ENCODE measurements at regions of chr13 and their contacts with region 1.

Region 1: GRCh38 chr13:48769107-48769704 is 115.5 kb downstream of the CYSLTR2 start:
- DNase-seq: peak; percentile 90
- ATAC-seq: peak; percentile 96
- H3K4me3 Mint-ChIP-seq: no peak overlapping the region
- H3K27ac Mint-ChIP-seq: no peak overlapping the region
- H3K4me1 Mint-ChIP-seq: peaks cover 29% of the 10 kb centered on the region
- H3K27me3 Mint-ChIP-seq: peaks cover 22% of the 10 kb centered on the region

Region 2: GRCh38 chr13:48037346-48038173 is 731.6 kb before region 1 on chr13 and contains the start of gene NUDT15:
- CTCF ChIA-PET with region 1: interaction called, 10 read pairs
- DNase-seq: peak; percentile 97
- ATAC-seq: peak; percentile 92
- H3K4me3 Mint-ChIP-seq: peak within 1 kb of the TSS; percentile 96
- H3K27ac Mint-ChIP-seq: peak within 1 kb of the TSS; percentile 95
- H3K4me1 Mint-ChIP-seq: peaks cover 42% of the 10 kb centered on the region
- H3K27me3 Mint-ChIP-seq: no peaks in the 10 kb centered on the region
- total RNA-seq, gene NUDT15: 10.6 to 13.7 TPM

Region 3: GRCh38 chr13:48126944-48127830 is 642.0 kb before region 1 on chr13:
- CTCF ChIA-PET with region 1: interaction called, 10 read pairs
- DNase-seq: peak; percentile 42
- ATAC-seq: peak; percentile 89
- H3K4me3 Mint-ChIP-seq: no peak overlapping the region
- H3K27ac Mint-ChIP-seq: peak overlapping the region; percentile 30
- H3K4me1 Mint-ChIP-seq: peaks cover 12% of the 10 kb centered on the region
- H3K27me3 Mint-ChIP-seq: peaks cover 4% of the 10 kb centered on the region

Region 4: DNA sequence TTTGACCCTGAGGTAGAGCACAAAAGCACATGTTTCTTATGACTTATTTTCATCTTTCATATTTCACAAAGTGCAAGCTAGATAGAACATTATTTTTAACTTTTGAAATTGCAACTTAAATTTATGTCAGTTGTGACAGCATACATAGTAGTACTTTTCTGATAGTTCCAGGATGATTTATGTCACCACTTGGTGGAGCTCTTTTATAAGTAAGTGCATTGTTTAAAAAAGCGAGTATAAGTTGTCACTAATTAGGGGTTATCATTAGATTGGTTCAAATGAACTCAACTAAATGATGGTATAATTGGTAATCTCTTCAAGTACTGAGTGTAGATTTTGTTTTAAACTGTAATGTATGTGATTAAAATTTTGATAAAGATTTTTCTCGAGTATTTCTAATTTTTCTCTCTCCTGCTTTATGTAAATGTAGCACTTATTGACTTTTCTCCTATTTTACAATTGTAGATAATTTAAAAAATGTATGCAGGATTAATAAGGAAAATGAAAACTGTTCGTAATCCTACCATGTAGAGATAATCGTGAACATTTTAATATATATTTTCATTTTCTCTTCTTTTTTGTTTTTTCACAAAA is 434.6 kb before region 1 on chr13:
- CTCF ChIA-PET with region 1: interaction called, 23 read pairs
- DNase-seq: no peak
- ATAC-seq: peak; percentile 72
- H3K4me3 Mint-ChIP-seq: no peak overlapping the region
- H3K27ac Mint-ChIP-seq: no peak overlapping the region
- H3K4me1 Mint-ChIP-seq: peaks cover 21% of the 10 kb centered on the region
- H3K27me3 Mint-ChIP-seq: no peaks in the 10 kb centered on the region

Region 5: DNA sequence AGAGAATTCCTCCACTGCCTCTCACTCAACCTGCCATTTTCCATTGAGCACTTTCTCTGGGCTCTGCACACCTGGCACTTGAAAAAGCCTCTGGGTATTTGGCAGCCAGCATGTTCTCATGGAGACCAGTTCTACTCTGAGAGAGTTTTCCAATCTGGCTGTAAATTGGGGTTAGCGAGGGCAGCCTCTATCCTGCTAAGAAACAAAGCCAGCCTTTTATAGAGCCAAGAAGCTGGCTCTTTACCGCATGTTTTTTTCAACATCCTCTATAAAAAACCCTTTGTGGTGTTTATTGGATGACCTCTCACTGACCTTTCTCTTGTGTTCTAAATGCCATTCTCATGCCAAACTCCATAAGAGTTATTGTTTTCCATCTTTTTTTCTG is 183.8 kb before region 1 on chr13:
- CTCF ChIA-PET with region 1: interaction called, 17 read pairs
- DNase-seq: no peak
- ATAC-seq: no peak
- H3K4me3 Mint-ChIP-seq: no peak overlapping the region
- H3K27ac Mint-ChIP-seq: no peak overlapping the region
- H3K4me1 Mint-ChIP-seq: peaks cover 20% of the 10 kb centered on the region
- H3K27me3 Mint-ChIP-seq: peaks cover 38% of the 10 kb centered on the region

Region 6: GRCh38 chr13:48595431-48596429 is 173.5 kb before region 1 on chr13:
- CTCF ChIA-PET with region 1: interaction called, 119 read pairs
- DNase-seq: peak; percentile 73
- ATAC-seq: peak; percentile 76
- H3K4me3 Mint-ChIP-seq: no peak overlapping the region
- H3K27ac Mint-ChIP-seq: no peak overlapping the region
- H3K4me1 Mint-ChIP-seq: peaks cover 3% of the 10 kb centered on the region
- H3K27me3 Mint-ChIP-seq: peaks cover 2% of the 10 kb centered on the region

Region 7: DNA sequence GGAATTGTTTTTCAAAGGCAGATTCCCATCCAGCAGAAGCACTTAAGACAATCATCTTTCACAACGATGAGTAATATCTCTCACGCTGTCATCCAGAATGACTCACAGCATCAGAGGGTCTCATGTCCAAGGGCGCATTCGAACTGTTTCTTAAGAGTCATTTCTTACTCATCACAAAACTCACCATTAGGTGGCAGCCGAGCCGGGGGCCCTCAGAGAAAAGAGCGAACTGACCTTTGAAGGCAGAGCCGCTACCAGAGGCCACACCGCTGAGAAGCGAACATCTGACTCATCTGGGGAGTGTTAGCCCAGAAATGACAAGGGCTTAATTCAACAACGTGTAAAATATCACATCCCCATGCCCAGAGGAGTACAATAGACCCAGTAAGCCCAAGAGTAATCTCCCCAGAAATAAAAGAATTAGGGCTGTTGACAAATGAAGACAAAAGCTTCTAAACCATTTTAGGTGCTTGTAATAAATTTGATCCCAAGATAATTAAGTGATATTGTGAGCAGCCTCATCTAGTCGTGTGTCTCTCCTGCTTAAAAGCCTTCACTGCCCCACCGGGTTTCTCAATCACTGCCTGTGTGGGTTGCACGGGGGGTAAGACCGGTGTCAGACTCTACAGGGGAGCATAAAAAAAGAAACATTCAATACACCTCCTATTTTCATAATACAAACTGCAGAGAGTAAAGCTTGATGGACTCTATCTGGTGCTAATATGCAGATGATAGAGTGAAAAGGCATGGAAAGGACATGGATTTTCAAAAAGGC is 19.3 kb before region 1 on chr13:
- CTCF ChIA-PET with region 1: interaction called, 12 read pairs
- DNase-seq: peak; percentile 92
- ATAC-seq: peak; percentile 93
- H3K4me3 Mint-ChIP-seq: peak overlapping the region; percentile 3
- H3K27ac Mint-ChIP-seq: peak overlapping the region; percentile 61
- H3K4me1 Mint-ChIP-seq: peaks cover 28% of the 10 kb centered on the region
- H3K27me3 Mint-ChIP-seq: no peaks in the 10 kb centered on the region

Measured in activated CD8-positive, alpha-beta memory T cell treated with anti-CD3 and anti-CD28 coated beads, Interleukin-2, amount 10 ng/mL, durations not matched to agents 7 days and 5 days (primary cell).